ENCODE measurements at regions of chr11 and their contacts with region 1.

Region 1: DNA sequence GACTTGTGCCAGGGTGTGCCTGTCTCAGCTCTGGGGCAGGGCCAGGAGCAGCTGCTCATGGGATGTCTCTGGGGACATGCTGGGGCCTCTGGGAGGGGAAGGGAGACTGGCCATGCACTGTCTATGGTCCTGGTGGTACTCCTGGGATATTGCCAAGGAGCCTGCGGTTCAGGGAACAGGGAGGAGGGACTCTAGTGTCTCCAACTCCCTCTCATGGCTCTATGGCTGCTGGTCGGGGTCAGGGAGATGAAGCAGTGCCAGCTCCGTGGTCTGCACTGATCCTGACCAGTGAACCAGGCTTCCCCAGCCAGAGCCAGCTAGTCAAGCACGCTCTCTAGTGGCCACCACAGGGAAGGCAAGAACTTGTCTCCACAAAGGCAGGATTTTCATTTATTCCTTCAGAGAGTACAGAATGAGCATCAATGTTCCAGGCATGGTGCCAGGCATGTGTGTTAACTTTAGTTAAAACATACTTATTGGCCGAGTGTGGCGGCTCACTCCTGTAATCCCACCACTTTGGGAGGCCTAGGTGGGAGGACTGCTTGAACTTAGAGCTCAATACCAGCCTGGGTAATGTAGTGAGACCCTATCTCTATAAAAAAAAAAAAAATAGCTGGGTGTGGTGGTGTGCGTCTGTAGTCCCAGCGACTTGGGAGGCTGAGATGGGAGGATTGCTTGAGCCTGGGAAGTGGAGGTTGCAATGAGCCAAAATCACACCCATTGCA is 2.5 kb upstream of the BEST1 start:
- DNase-seq: peak; percentile 82
- H3K4me3 Mint-ChIP-seq: no peak overlapping the region
- H3K27ac Mint-ChIP-seq: no peak overlapping the region
- H3K4me1 Mint-ChIP-seq: no peaks in the 10 kb centered on the region
- H3K27me3 Mint-ChIP-seq: peaks cover 26% of the 10 kb centered on the region

Region 2: DNA sequence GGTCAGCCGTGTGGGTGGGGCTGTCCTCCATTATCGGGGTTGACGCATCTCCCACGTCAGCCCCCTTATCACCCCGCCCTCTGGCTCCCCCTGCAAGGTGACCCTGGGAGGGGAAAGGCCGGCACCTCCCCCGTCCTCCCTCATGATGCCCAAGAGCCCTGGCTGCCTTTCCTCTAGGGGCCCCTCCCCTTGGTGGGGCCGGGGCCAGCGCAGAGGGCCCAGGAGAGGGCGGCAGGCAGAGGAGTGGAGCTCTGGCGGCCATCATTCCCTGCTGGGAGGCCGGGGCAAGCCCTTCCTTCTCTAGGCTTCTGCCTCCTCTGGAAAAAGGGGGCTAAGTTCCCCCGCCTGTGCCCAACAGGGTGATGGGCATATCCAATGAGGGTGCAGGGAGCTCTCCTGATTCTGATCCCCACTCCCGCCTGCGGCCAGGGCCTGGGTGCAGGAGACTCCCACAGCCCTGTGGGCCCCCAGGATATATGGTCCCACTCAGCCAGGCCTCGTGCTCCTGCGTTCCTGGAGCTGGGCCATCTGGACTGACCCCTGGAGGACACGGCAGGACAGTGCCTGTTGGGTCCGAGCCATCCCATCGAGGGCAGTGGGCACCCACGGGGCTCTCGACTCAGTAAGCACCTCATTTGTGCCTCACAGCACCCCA is 182.9 kb before region 1 on chr11:
- CTCF ChIA-PET with region 1: no interaction called
- DNase-seq: no peak
- H3K4me3 Mint-ChIP-seq: no peak overlapping the region
- H3K27ac Mint-ChIP-seq: no peak overlapping the region
- H3K4me1 Mint-ChIP-seq: no peaks in the 10 kb centered on the region
- H3K27me3 Mint-ChIP-seq: peaks cover 20% of the 10 kb centered on the region

Region 3: DNA sequence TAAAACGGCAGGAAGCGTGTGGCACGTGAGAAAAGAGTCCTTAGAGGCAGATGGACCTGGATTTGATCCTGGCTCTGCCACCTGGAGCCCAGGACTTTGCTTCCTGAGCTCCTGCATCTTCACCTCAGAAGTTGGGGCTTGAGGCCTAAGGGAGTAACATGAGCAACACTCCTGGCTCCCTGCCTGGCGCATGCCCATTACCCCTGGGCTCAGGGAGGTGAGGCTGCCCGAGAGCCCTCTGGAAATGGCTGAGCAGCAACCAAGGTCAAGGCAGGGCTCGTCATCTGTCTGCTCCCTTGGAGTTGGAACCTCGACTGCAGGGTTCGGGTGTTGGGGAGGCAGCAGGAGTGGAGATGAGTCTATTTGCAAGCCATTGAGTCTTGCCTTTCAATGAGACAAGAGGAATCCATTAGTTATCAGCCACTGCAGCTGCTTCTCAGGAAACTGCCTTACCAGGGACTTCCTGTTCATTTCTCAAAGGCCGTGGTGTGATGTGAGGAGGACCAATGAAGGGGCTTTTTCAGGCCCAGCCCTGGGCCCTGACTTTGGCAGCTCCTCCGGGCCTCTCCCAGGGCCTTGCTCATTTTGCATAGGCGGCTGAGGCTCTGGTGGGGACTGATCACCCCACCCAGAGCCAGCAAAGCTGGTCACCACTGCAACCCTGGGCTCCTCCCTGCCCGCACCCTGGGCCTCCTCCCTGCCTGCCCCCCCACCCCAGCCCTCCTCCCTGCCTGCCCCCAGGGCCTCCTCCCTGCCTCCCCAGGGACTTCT is 113.2 kb before region 1 on chr11:
- CTCF ChIA-PET with region 1: no interaction called
- DNase-seq: peak; percentile 86
- H3K4me3 Mint-ChIP-seq: peak overlapping the region; percentile 73
- H3K27ac Mint-ChIP-seq: peak overlapping the region; percentile 99
- H3K4me1 Mint-ChIP-seq: peaks cover 67% of the 10 kb centered on the region
- H3K27me3 Mint-ChIP-seq: peaks cover 2% of the 10 kb centered on the region

Region 4: DNA sequence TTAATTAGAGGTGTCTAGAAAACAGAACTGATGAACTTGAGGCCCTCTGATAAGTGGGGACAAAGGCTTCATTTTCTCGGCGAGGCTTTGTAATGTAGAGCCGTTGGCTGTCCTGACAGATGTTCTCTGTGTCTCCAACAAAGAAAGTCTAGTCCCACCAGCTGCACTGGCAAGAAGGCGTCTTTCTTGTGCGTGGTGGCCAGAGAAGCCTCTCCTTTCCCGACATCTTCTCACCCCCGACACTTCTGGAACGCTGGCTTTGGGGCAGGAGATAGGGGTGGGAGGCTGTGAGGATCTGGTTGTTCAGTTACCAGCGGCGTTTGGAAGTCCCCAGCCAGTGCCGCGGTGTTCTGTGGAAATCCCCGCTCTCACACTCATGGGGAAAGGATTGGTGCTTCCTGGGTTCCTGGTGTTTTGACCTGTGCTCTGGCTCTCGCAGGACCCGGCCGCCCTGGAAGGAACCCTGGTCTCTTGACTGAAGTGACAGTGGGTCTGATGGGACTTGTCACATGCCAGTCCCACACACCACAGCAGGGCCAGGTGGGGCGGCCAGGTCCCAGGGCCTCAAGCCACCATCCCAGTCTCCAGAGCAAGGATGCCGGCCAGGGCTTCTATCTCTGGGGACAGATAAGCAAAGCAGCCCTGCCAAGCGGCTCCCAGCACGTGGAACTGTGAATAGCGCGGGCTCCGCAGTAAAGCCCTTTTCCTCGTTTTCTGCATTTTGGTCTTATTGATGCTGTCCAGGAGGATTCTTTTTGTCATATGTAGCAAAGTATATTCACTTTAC is 96.3 kb before region 1 on chr11:
- CTCF ChIA-PET with region 1: no interaction called
- DNase-seq: no peak
- H3K4me3 Mint-ChIP-seq: no peak overlapping the region
- H3K27ac Mint-ChIP-seq: no peak overlapping the region
- H3K4me1 Mint-ChIP-seq: no peaks in the 10 kb centered on the region
- H3K27me3 Mint-ChIP-seq: no peaks in the 10 kb centered on the region

Region 5: GRCh38 chr11:61871158-61871597 is 76.5 kb before region 1 on chr11:
- CTCF ChIA-PET with region 1: interaction called, 29 read pairs
- DNase-seq: peak; percentile 78
- H3K4me3 Mint-ChIP-seq: peak overlapping the region; percentile 55
- H3K27ac Mint-ChIP-seq: no peak overlapping the region
- H3K4me1 Mint-ChIP-seq: peaks cover 3% of the 10 kb centered on the region
- H3K27me3 Mint-ChIP-seq: peaks cover 39% of the 10 kb centered on the region

Region 6: DNA sequence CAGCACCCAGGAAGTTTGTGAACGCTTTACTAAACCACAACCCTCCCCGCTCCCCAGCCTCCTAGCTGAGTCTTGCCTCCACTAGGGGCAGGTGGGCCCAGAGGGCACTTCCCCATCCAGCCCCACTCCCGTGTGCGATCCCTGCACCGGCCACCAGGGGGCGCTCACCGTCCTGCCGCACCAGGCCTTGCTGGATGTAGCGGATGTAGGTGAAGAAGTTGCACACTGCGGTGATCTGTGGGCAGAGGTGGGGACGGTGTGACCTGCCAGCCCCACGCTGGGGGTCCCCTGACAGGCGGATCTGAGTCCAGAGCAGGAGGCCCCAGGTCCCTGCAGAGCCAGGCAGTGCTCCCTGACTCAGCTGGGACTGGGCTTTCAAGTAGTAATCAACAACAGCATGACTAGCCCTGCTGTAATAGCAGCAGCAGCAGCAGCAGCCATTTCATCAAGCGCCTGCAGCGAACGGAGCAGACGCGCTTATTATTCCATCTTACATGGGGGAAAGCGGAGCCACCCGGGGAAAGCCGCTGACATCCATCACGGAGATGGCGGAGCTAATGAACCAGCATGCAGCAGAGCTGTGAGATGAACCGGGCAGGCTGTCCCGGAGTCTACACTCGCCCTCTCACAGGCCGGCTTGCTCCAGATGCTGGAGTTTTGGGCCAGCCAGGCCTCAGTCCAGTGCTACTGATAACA is 48.4 kb before region 1 on chr11:
- CTCF ChIA-PET with region 1: interaction called, 176 read pairs
- DNase-seq: peak; percentile 94
- H3K4me3 Mint-ChIP-seq: no peak overlapping the region
- H3K27ac Mint-ChIP-seq: peak overlapping the region; percentile 19
- H3K4me1 Mint-ChIP-seq: peaks cover 6% of the 10 kb centered on the region
- H3K27me3 Mint-ChIP-seq: peaks cover 16% of the 10 kb centered on the region

Region 7: DNA sequence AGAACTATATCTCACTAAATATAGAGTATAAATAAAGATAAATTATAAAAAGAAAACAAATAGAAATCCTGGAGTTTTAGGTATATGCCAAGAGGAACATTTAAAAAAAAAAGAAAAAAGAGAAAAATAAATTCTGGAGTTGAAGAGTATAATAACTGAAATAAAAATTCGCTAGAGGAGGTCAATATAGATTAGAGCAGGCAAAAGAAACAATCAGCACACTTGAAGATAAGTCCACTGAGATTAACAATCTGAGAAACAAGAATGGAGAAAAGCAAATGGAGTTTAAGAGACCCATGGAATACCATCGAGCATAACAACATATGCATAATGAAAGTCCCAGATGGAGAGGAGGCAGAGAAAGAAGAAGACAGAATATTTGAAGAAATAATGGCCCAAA is 11.8 kb before region 1 on chr11:
- CTCF ChIA-PET with region 1: interaction called, 11 read pairs
- DNase-seq: no peak
- H3K4me3 Mint-ChIP-seq: no peak overlapping the region
- H3K27ac Mint-ChIP-seq: no peak overlapping the region
- H3K4me1 Mint-ChIP-seq: no peaks in the 10 kb centered on the region
- H3K27me3 Mint-ChIP-seq: peaks cover 30% of the 10 kb centered on the region

Region 8: GRCh38 chr11:62054484-62055121 is 107.0 kb after region 1 on chr11:
- CTCF ChIA-PET with region 1: interaction called, 10 read pairs
- DNase-seq: peak; percentile 50
- H3K4me3 Mint-ChIP-seq: no peak overlapping the region
- H3K27ac Mint-ChIP-seq: no peak overlapping the region
- H3K4me1 Mint-ChIP-seq: no peaks in the 10 kb centered on the region
- H3K27me3 Mint-ChIP-seq: peaks cover 13% of the 10 kb centered on the region

Region 9: GRCh38 chr11:62497132-62497915 is 549.7 kb after region 1 on chr11:
- CTCF ChIA-PET with region 1: no interaction called
- DNase-seq: peak; percentile 36
- H3K4me3 Mint-ChIP-seq: no peak overlapping the region
- H3K27ac Mint-ChIP-seq: no peak overlapping the region
- H3K4me1 Mint-ChIP-seq: peaks cover 5% of the 10 kb centered on the region
- H3K27me3 Mint-ChIP-seq: peaks cover 51% of the 10 kb centered on the region